Activated T-helper 1 cell treated with anti-CD3 and anti-CD28 coated beads, Interleukin-12 subunit alpha, Interleukin-12 subunit beta, Interleukin-2, Interleukin-4 antibody, amounts not matched to agents 30 ng/mL and 10 ng/mL and 1 ng/mL, durations not matched to agents 14 hours and 24 hours and 36 hours (primary cell): ENCODE measurements at regions of chr3 and their contacts with region 1.

Region 1: GRCh38 chr3:171459942-171460724 is at the start of gene TNIK:
- DNase-seq: peak; percentile 92
- H3K4me3 Mint-ChIP-seq: peak within 1 kb of the TSS; percentile 96
- H3K27ac Mint-ChIP-seq: peak within 1 kb of the TSS; percentile 91
- H3K4me1 Mint-ChIP-seq: peaks cover 55% of the 10 kb centered on the region
- H3K27me3 Mint-ChIP-seq: no peaks in the 10 kb centered on the region
- total RNA-seq, gene TNIK: 21.0 and 21.5 TPM in 2 replicates

Region 2: DNA sequence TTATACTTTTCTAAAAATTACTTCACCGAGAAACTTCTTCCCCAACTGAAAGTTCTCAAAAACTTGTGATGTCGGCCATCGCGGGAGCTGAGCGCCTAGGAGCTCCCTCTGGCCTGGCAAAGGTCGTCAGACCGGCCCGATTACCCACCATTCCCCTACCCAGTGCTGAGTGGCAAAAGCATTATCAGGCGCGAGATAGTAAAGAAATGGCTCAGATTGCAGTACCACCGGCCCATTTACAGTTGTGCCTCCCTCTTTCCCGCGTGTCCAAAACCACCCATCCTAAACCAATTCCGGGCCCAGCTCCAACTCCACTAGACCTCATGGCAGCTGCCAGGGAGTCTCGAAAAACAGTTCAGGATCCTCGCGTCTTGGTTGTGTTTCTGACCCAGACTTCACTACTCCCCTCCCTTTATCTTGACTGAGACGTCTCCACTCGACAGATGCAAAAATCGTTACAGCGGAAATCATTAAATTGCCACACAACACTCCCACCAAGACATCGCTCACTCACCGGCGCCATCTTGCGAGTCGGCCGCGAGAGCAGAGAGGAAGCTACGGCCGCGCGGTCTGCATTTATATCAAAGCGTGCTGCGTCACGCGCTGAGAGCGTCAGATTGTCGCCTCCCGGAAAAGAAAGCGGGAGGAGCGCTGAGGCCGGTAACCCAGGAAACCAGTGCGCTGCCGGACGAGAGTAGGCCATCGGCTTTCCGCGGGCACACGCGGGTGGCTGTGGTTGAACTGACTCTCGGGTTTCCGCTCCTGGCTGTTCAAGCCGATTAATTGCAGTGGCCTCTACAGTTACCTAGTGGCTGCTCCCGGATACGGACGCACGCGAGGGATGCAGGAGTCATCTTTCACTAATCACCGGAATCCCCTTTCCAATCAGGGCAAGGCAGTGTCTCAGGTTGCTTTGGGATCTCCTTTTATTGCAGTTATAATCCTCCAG is 590.2 kb before region 1 on chr3 and contains the start of gene RPL22L1:
- intact Hi-C with region 1: loop called (anchors 2 kb)
- DNase-seq: peak; percentile 90
- H3K4me3 Mint-ChIP-seq: peak within 1 kb of the TSS; percentile 98
- H3K27ac Mint-ChIP-seq: peak within 1 kb of the TSS; percentile 100
- H3K4me1 Mint-ChIP-seq: peaks cover 24% of the 10 kb centered on the region
- H3K27me3 Mint-ChIP-seq: peaks cover 4% of the 10 kb centered on the region
- total RNA-seq, gene RPL22L1: 123 and 145 TPM in 2 replicates

Region 3: GRCh38 chr3:171187706-171188290 is 272.3 kb before region 1 on chr3:
- intact Hi-C with region 1: loop called (anchors 1 kb)
- DNase-seq: no peak
- H3K4me3 Mint-ChIP-seq: no peak overlapping the region
- H3K27ac Mint-ChIP-seq: no peak overlapping the region
- H3K4me1 Mint-ChIP-seq: peaks cover 56% of the 10 kb centered on the region
- H3K27me3 Mint-ChIP-seq: no peaks in the 10 kb centered on the region

Region 4: GRCh38 chr3:171284308-171285075 is 175.6 kb before region 1 on chr3:
- intact Hi-C with region 1: loop called (anchors 1 kb)
- DNase-seq: no peak
- H3K4me3 Mint-ChIP-seq: no peak overlapping the region
- H3K27ac Mint-ChIP-seq: peak overlapping the region; percentile 52
- H3K4me1 Mint-ChIP-seq: peaks cover 71% of the 10 kb centered on the region
- H3K27me3 Mint-ChIP-seq: no peaks in the 10 kb centered on the region

Region 5: DNA sequence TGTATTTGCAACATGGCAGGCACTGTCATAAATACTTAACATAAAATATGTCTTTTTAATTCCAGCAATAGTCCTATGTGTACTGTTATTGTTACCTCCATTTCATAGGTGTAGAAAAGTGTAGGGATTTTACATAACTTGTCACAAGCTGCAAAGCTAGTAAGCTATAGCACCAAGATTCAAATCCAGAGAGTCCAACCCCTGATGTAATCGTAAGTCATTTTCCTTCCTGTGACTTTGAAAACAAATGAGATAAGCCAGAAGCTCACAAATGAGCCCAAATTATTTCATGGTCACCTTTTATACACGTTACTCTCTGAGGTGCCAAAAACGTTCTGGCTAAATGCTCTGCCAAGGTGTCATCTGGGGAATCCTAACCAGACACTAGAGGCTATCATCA is 23.8 kb before region 1 on chr3:
- intact Hi-C with region 1: no loop called
- DNase-seq: no peak
- H3K4me3 Mint-ChIP-seq: no peak overlapping the region
- H3K27ac Mint-ChIP-seq: no peak overlapping the region
- H3K4me1 Mint-ChIP-seq: peaks cover 37% of the 10 kb centered on the region
- H3K27me3 Mint-ChIP-seq: no peaks in the 10 kb centered on the region

Region 6: GRCh38 chr3:171561596-171562323 is 101.6 kb after region 1 on chr3:
- intact Hi-C with region 1: loop called (anchors 1 kb)
- DNase-seq: no peak
- H3K4me3 Mint-ChIP-seq: peak overlapping the region; percentile 50
- H3K27ac Mint-ChIP-seq: peak overlapping the region; percentile 92
- H3K4me1 Mint-ChIP-seq: peaks cover 66% of the 10 kb centered on the region
- H3K27me3 Mint-ChIP-seq: no peaks in the 10 kb centered on the region

Region 7: DNA sequence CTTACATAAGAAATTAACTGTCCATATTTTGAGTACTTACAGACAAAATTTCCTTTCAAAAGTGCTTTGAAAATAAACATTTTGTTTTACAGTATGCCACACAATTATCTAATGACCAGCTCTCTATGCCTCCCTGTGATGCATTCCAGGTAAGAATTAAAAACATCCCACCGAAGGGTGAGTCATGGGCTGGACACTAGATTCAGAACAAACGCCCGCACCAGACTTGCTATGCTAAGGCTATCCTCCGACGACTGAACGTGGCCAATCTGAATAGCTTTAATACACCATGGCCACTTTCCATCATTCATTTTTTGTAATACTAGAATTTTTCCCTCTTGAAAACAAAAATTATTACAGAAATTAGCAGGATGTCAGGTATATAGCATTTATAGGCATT is 139.9 kb after region 1 on chr3:
- intact Hi-C with region 1: no loop called
- DNase-seq: no peak
- H3K4me3 Mint-ChIP-seq: no peak overlapping the region
- H3K27ac Mint-ChIP-seq: no peak overlapping the region
- H3K4me1 Mint-ChIP-seq: no peaks in the 10 kb centered on the region
- H3K27me3 Mint-ChIP-seq: peaks cover 4% of the 10 kb centered on the region

Region 8: DNA sequence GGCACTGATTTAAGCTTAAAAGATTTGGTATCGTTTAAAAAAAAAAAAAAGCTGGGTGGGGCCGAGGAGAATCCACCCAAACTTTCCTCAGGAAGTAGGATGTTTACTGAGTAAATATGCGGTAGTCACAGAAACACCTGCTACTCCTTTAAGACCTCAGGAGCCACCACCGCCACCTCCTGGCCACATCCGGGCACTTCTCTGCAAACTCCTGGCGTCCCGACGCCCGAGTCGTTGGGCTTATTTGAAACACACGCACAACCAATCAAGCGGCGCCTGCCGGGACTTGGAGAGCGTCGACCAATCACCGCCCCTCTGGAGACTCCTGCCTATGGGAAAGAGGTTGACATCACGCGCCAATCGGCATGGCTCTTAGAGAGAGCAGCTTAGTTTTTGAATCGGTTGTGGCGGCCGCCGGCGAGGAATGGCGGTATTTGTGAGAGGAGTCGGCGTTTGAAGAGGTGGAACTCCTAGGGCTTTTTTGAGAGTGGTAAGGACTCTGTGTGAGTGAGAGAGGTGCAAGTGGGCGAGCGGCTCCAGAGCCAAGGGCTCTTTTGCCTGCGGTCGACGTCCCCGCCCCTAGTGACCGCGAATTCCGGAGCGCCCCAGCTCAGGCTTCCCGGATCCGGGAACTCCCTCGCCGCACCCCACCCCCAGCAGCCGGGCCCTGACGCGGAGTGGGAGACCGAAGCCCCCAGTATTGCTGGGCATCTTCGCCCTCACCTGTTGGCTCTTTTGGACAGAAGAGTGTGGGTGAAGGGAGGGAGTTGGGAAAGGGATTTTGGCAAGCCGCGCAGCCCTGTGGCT is 1290.4 kb after region 1 on chr3 and contains the start of gene ECT2:
- intact Hi-C with region 1: loop called (anchors 1 kb)
- DNase-seq: peak; percentile 97
- H3K4me3 Mint-ChIP-seq: peak within 1 kb of the TSS; percentile 94
- H3K27ac Mint-ChIP-seq: peak within 1 kb of the TSS; percentile 97
- H3K4me1 Mint-ChIP-seq: peaks cover 38% of the 10 kb centered on the region
- H3K27me3 Mint-ChIP-seq: peaks cover 4% of the 10 kb centered on the region
- total RNA-seq, gene ECT2: 34.5 and 39.6 TPM in 2 replicates